WTC11 (cell line): ENCODE measurements at regions of chr2 and their contacts with region 1.

Region 1: GRCh38 chr2:170822290-170823087 is 5.8 kb downstream of the GAD1 start:
- DNase-seq: peak; percentile 69
- ATAC-seq: peak; percentile 5
- H3K4me3 Mint-ChIP-seq: peak overlapping the region; percentile 84
- H3K27ac Mint-ChIP-seq: no peak overlapping the region
- H3K4me1 Mint-ChIP-seq: peaks cover 49% of the 10 kb centered on the region
- H3K27me3 Mint-ChIP-seq: peaks cover 98% of the 10 kb centered on the region
- CTCF ChIP-seq: peak; percentile 18; the same call in 1 of the 2 replicates

Region 2: GRCh38 chr2:170324640-170325046 is 497.8 kb before region 1 on chr2:
- CTCF ChIA-PET with region 1: interaction called, 10 read pairs
- POLR2A ChIA-PET with region 1: no interaction called
- DNase-seq: peak; percentile 74
- ATAC-seq: peak; percentile 89
- H3K4me3 Mint-ChIP-seq: no peak overlapping the region
- H3K27ac Mint-ChIP-seq: no peak overlapping the region
- H3K4me1 Mint-ChIP-seq: peaks cover 15% of the 10 kb centered on the region
- H3K27me3 Mint-ChIP-seq: no peaks in the 10 kb centered on the region; the same call in 1 of the 2 replicates
- CTCF ChIP-seq: peak; percentile 61

Region 3: GRCh38 chr2:170361090-170361936 is 461.2 kb before region 1 on chr2:
- CTCF ChIA-PET with region 1: interaction called, 26 read pairs
- POLR2A ChIA-PET with region 1: no interaction called
- DNase-seq: peak; percentile 66
- ATAC-seq: peak; percentile 84
- H3K4me3 Mint-ChIP-seq: no peak overlapping the region
- H3K27ac Mint-ChIP-seq: no peak overlapping the region
- H3K4me1 Mint-ChIP-seq: peaks cover 41% of the 10 kb centered on the region
- H3K27me3 Mint-ChIP-seq: peaks cover 5% of the 10 kb centered on the region; the same call in 1 of the 2 replicates
- CTCF ChIP-seq: peak; percentile 36

Region 4: GRCh38 chr2:170369894-170370293 is 452.6 kb before region 1 on chr2:
- CTCF ChIA-PET with region 1: interaction called, 10 read pairs
- POLR2A ChIA-PET with region 1: no interaction called
- DNase-seq: no peak
- ATAC-seq: no peak
- H3K4me3 Mint-ChIP-seq: no peak overlapping the region
- H3K27ac Mint-ChIP-seq: no peak overlapping the region
- H3K4me1 Mint-ChIP-seq: peaks cover 56% of the 10 kb centered on the region
- H3K27me3 Mint-ChIP-seq: peaks cover 7% of the 10 kb centered on the region
- CTCF ChIP-seq: no peak

Region 5: DNA sequence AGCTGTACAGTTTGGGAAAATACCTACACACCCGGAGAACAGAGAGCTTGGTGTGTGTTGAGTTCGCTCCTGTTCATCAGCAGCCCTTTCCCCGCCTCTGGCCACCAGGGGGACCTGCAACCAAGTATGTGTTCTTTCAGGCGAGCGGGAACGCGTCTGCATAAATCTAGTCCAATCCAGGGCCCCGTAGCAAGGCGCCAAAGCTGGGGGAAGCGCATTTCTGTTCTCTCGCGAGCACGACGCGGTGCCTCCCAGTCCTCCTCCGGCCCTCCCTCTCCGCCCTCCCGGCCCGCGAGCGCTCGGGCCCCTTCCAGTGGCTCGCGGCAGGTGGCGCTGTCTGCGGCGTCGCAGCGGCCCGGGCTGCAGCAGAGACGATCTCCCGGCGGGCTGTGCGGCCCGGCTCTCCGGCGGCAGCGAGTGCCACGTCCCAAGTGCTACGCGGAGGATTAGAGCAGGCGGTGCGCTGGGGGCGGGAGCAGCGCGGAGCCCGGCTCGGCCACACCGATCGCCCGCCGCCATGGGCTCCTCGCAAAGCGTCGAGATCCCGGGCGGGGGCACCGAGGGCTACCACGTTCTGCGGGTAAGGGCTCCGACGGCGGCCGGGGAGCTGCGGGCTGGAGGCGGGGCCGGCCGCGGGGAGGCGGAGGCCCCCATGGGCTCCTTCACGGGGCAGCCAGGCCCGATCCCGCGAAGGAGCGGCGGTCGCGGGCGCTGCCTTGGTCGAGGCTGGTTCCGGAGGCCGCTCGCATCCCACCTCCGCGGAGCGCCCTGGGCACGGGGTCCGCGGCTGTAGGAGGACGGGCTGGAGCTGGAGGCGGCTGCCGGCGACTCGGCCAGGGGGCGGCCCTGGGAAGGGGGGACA is 106.6 kb after region 1 on chr2 and contains the start of gene GORASP2:
- CTCF ChIA-PET with region 1: interaction called, 14 read pairs
- POLR2A ChIA-PET with region 1: no interaction called
- DNase-seq: peak; percentile 99
- ATAC-seq: peak; percentile 97
- H3K4me3 Mint-ChIP-seq: peak within 1 kb of the TSS; percentile 91
- H3K27ac Mint-ChIP-seq: peak within 1 kb of the TSS; percentile 97
- H3K4me1 Mint-ChIP-seq: peaks cover 46% of the 10 kb centered on the region
- H3K27me3 Mint-ChIP-seq: no peaks in the 10 kb centered on the region
- CTCF ChIP-seq: peak; percentile 91
- total RNA-seq, gene GORASP2: 77.8 to 102 TPM (median 79.2 TPM) in 3 replicates